ENCODE measurements at regions of chr4 and their contacts with region 1.

Region 1: DNA sequence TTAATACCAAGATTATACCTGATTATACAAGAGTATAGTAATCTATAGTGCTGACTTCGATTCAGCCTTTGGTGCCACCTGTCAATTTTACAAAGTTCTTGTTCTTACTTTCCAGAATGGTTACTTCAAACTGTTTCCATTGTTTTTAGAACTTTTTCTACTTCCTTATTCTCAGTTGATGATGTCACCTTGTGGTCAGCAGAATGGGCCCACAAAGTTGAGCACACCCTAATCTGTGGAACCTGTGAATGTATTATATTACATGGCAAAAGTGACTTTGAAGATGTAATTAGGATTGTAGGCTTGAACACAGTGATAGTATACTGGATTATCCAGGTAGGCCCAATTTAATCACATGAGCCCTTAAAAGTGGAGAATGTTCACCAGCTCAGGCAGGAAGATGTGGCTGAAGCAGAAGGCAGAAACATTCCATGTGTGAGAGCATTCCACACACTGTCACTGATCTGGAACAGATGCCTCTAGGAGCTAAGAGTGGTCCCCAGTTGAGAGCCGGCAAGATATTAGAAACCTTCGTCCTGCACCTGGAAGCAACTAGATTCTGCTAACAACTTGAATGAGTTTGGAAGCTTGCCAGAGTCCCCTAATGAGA is 6.3 kb upstream of the SGMS2 start:
- DNase-seq: no peak
- ATAC-seq: no peak
- H3K4me3 ChIP-seq: no peak overlapping the region
- H3K27ac ChIP-seq: no peak overlapping the region
- H3K4me1 ChIP-seq: peaks cover under 1% of the 10 kb centered on the region
- H3K27me3 ChIP-seq: no peaks in the 10 kb centered on the region
- CTCF ChIP-seq: no peak

Region 2: DNA sequence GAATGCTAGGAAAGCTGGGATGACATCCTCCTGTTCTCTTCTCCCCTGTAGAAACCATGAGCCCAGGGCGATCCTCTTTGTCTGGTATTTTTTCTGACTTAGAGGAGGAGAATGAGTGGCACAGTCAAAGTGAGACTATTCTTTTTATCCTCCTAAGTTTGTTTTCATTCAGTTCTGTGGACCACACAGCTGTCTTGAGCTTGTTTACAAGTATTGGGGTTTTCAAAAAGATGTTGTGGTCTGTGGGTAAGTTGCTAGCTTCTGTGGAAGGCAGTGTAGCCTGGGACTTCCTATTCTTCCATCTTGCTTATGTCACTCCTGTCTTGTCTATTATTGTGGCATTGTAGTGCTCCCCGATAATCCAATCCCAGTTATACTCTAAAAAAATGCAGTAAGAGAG is 321.4 kb before region 1 on chr4:
- intact Hi-C with region 1: no loop called
- DNase-seq: no peak
- ATAC-seq: no peak
- H3K4me3 ChIP-seq: no peak overlapping the region
- H3K27ac ChIP-seq: no peak overlapping the region
- H3K4me1 ChIP-seq: no peaks in the 10 kb centered on the region
- H3K27me3 ChIP-seq: no peaks in the 10 kb centered on the region
- CTCF ChIP-seq: no peak

Region 3: GRCh38 chr4:107906458-107907100 is 88.2 kb after region 1 on chr4:
- intact Hi-C with region 1: loop called in 1 of 2 experiments (anchors 5 kb)
- DNase-seq: no peak
- ATAC-seq: no peak
- H3K4me3 ChIP-seq: no peak overlapping the region
- H3K27ac ChIP-seq: no peak overlapping the region
- H3K4me1 ChIP-seq: peaks cover 9% of the 10 kb centered on the region
- H3K27me3 ChIP-seq: no peaks in the 10 kb centered on the region
- CTCF ChIP-seq: no peak

Measured in psoas muscle (tissue), 8 donors.